ENCODE measurements at regions of chr2 and their contacts with region 1.

Region 1: DNA sequence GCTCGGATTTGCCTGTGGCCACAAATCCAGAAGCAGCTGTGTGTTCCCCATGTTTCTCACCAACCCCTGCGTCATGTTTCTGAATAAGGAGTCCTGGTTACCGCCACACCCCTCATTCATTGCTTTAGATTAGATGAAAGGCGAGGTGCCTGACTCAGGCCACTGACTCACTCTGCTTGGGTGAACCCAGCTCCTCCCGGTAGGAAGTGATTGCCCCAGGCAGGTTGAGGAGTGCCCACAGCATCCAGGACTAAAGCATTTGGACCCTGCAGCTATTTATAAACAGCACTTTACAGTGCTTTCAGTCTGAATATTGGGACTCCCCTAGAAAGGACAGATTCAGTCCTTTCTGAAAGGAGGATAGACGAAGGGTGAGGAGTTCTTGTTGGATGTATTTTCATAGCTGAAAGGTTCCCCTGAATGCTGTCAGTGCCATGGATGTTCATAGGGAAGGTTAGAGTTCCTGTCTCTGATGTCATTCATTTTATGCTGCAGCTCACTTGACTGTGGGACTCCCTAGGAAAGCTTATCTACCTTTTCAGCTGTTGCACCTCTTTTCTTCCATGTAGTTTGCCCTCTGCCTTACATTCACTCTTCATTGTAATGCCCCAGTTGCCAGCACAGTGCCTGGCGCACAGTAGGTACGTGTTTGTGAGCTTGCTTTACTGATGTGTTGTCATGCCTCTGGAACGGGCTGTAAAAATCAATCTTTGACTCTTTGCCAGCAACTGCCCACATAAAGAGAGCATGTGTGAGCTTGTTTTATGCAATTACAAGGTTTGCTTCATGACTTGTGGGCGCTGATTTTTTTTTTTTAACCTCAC is 14.9 kb downstream of the ITGA6 start:
- DNase-seq: peak in 3 of 35 experiments; percentile 37 to 64 (median 53)
- ATAC-seq: peak; percentile 48 to 84 (median 80)
- H3K4me3 ChIP-seq: peak overlapping the region; percentile 7 to 47
- H3K4me3 Mint-ChIP-seq: peak overlapping the region in 2 of 3 donors; percentile 78 to 82
- H3K27ac ChIP-seq: no peak overlapping the region
- H3K27ac Mint-ChIP-seq: peak overlapping the region; percentile 83 to 89
- H3K4me1 ChIP-seq: peaks cover 60 to 70% of the 10 kb centered on the region in 2 experiments
- H3K4me1 Mint-ChIP-seq: peaks cover 52 to 55% (median 54%) of the 10 kb centered on the region in 3 donors
- H3K27me3 ChIP-seq: no peaks in the 10 kb centered on the region
- H3K27me3 Mint-ChIP-seq: no peaks in the 10 kb centered on the region

Region 2: DNA sequence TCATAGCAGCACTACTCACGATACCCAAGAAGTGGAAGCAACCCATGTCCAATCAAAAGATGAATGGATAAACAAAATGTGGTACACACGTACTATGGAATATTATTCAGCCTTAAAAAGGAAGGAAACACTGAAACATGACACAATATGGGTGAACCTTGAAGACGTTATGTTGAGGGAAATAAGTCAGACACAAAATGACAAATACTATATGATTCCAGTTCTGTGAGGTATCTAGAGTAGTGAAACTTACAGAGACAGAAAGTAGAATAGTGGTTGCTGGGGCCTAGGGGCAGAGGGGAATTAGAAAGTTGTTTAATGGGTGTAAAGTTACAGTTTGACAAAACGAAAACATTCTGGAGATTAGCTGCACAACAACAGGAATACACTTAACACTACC is 1306.3 kb before region 1 on chr2:
- CTCF ChIA-PET with region 1: no interaction called
- POLR2A ChIA-PET with region 1: no interaction called
- DNase-seq: no peak
- ATAC-seq: no peak
- H3K4me3 ChIP-seq: no peak overlapping the region
- H3K4me3 Mint-ChIP-seq: peak overlapping the region in 1 of 3 donors; percentile 7
- H3K27ac ChIP-seq: no peak overlapping the region
- H3K27ac Mint-ChIP-seq: peak overlapping the region; percentile 50 to 82
- H3K4me1 ChIP-seq: peaks cover 5 to 8% of the 10 kb centered on the region in 2 experiments
- H3K4me1 Mint-ChIP-seq: peaks cover 70 to 83% (median 80%) of the 10 kb centered on the region in 3 donors
- H3K27me3 ChIP-seq: no peaks in the 10 kb centered on the region
- H3K27me3 Mint-ChIP-seq: no peaks in the 10 kb centered on the region

Region 3: GRCh38 chr2:171913517-171913916 is 528.8 kb before region 1 on chr2:
- CTCF ChIA-PET with region 1: interaction called in 1 of 2 experiments, 11 read pairs
- POLR2A ChIA-PET with region 1: no interaction called
- DNase-seq: no peak
- ATAC-seq: no peak
- H3K4me3 ChIP-seq: no peak overlapping the region
- H3K4me3 Mint-ChIP-seq: no peak overlapping the region
- H3K27ac ChIP-seq: no peak overlapping the region
- H3K27ac Mint-ChIP-seq: no peak overlapping the region
- H3K4me1 ChIP-seq: no peaks in the 10 kb centered on the region
- H3K4me1 Mint-ChIP-seq: no peaks in the 10 kb centered on the region
- H3K27me3 ChIP-seq: peaks cover 0 to 8% of the 10 kb centered on the region in 2 experiments
- H3K27me3 Mint-ChIP-seq: no peaks in the 10 kb centered on the region

Region 4: GRCh38 chr2:172168917-172169346 is 273.4 kb before region 1 on chr2:
- CTCF ChIA-PET with region 1: no interaction called
- POLR2A ChIA-PET with region 1: no interaction called
- DNase-seq: no peak
- ATAC-seq: no peak
- H3K4me3 ChIP-seq: no peak overlapping the region
- H3K4me3 Mint-ChIP-seq: no peak overlapping the region
- H3K27ac ChIP-seq: no peak overlapping the region
- H3K27ac Mint-ChIP-seq: no peak overlapping the region
- H3K4me1 ChIP-seq: peaks cover 0 to 12% of the 10 kb centered on the region in 2 experiments
- H3K4me1 Mint-ChIP-seq: peaks cover 4 to 8% (median 6%) of the 10 kb centered on the region in 3 donors
- H3K27me3 ChIP-seq: peaks cover 0 to 13% of the 10 kb centered on the region in 2 experiments
- H3K27me3 Mint-ChIP-seq: peaks cover 0 to 8% of the 10 kb centered on the region in 2 donors

Region 5: GRCh38 chr2:172427256-172427989 is 14.9 kb before region 1 on chr2 and contains the start of gene ITGA6:
- CTCF ChIA-PET with region 1: interaction called, 15 to 59 read pairs
- POLR2A ChIA-PET with region 1: interaction called, 6 read pairs
- DNase-seq: peak; percentile 43 to 84 (median 62)
- ATAC-seq: peak; percentile 72 to 79 (median 76)
- H3K4me3 ChIP-seq: peak within 1 kb of the TSS; percentile 67 to 93
- H3K4me3 Mint-ChIP-seq: peak within 1 kb of the TSS in 2 of 3 donors; percentile 88 to 94
- H3K27ac ChIP-seq: peak within 1 kb of the TSS; percentile 45
- H3K27ac Mint-ChIP-seq: peak within 1 kb of the TSS; percentile 90 to 92
- H3K4me1 ChIP-seq: peaks cover 32 to 38% of the 10 kb centered on the region in 2 experiments
- H3K4me1 Mint-ChIP-seq: peaks cover 34 to 76% (median 34%) of the 10 kb centered on the region in 3 donors
- H3K27me3 ChIP-seq: no peaks in the 10 kb centered on the region
- H3K27me3 Mint-ChIP-seq: no peaks in the 10 kb centered on the region
- total RNA-seq, gene ITGA6: 50.7 to 188 (median 80.9) TPM

Region 6: DNA sequence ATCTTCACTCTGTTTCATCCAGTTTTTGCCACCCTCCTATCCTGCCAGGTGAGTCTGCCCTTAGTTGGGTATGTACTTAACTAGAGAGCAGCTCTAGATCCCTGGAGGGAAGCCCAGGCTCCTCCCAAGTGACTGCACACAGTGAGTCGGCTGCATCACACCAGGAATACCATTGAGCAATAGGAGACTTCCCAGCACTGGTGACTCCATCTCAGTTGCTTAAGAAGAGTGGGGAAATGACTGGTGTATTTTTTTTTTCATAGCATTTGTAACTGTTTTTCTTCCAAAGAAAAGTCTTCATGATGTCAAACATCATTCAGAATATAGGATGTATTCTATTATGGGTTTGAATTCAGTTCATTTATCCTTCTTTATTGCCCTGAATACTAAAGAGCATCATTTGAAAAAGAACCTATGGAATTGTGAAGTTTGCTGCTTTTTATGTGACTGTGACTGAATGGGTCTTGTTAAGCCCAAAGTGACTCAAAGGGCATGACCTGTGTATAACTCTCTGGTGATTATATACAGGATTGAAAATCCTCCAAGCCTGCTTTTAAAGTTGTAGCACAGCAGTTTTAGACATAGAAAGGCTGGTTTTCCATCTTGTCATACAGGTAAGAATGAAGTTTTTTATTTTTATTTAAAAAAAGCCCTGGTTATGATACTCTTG is 717.6 kb after region 1 on chr2:
- CTCF ChIA-PET with region 1: no interaction called
- POLR2A ChIA-PET with region 1: no interaction called
- DNase-seq: peak in 1 of 35 experiments; percentile 1
- ATAC-seq: no peak
- H3K4me3 ChIP-seq: no peak overlapping the region
- H3K4me3 Mint-ChIP-seq: no peak overlapping the region
- H3K27ac ChIP-seq: no peak overlapping the region
- H3K27ac Mint-ChIP-seq: no peak overlapping the region
- H3K4me1 ChIP-seq: no peaks in the 10 kb centered on the region
- H3K4me1 Mint-ChIP-seq: no peaks in the 10 kb centered on the region
- H3K27me3 ChIP-seq: no peaks in the 10 kb centered on the region
- H3K27me3 Mint-ChIP-seq: no peaks in the 10 kb centered on the region